ENCODE measurements at regions of chr14 and their contacts with region 1.

Region 1: GRCh38 chr14:23631702-23632460 is 4.3 kb upstream of the DHRS2 start:
- DNase-seq: peak; percentile 59 to 75 (median 69)
- H3K4me3 ChIP-seq: peak overlapping the region in 1 of 2 donors; percentile 20
- H3K4me3 Mint-ChIP-seq: peak overlapping the region; percentile 8 to 87 (median 66)
- H3K27ac ChIP-seq: no peak overlapping the region
- H3K27ac Mint-ChIP-seq: peak overlapping the region in 5 of 7 donors; percentile 13 to 59 (median 38)
- H3K4me1 ChIP-seq: peaks cover 5% of the 10 kb centered on the region
- H3K4me1 Mint-ChIP-seq: peaks cover 5 to 12% (median 6%) of the 10 kb centered on the region in 4 donors
- H3K27me3 ChIP-seq: no peaks in the 10 kb centered on the region
- H3K27me3 Mint-ChIP-seq: peaks cover 0 to 2% of the 10 kb centered on the region in 2 donors

Region 2: DNA sequence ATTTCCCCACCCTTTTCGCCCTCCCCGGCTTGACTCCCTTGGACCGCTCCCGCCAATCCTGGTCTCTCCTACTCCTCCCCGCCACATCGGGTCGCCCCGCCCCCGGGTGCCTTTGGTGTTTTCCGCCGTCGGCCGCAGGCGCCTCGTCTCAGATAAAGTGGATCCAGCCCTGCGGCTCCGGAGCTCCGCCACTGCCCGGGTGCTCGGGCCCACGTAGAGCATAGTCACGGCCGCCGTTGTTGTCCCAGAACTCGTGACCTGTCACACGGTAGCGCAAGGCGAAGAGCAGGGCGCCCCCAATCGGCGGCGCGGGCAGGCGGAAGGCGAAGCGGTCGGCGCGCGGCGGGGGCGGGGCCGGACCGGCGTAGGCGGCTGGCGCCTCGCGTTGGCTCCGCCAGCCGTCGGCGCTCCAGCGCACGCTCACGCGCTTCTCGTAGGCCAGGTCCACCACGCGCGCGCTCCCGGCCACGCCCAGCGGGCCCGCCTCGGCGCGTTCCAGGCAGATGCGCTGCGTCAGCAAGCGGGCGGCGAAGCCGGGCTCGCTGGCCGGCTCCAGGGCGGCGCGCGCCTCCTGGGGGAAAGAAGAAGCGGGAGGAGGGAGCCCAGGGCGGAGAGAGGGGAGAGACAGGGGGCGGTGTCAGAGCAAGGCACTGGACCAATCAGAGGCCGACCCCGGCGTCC is 330.5 kb before region 1 on chr14:
- CTCF ChIA-PET with region 1: no interaction called
- POLR2A ChIA-PET with region 1: no interaction called
- intact Hi-C with region 1: no loop called
- DNase-seq: peak; percentile 95 to 99 (median 98)
- H3K4me3 ChIP-seq: peak overlapping the region; percentile 86 to 90
- H3K4me3 Mint-ChIP-seq: peak overlapping the region; percentile 89 to 100 (median 90)
- H3K27ac ChIP-seq: peak overlapping the region; percentile 87
- H3K27ac Mint-ChIP-seq: peak overlapping the region; percentile 92 to 99 (median 96)
- H3K4me1 ChIP-seq: peaks cover 14% of the 10 kb centered on the region
- H3K4me1 Mint-ChIP-seq: peaks cover 14 to 29% (median 23%) of the 10 kb centered on the region in 4 donors
- H3K27me3 ChIP-seq: no peaks in the 10 kb centered on the region
- H3K27me3 Mint-ChIP-seq: peaks cover 8 to 9% of the 10 kb centered on the region in 2 donors

Region 3: DNA sequence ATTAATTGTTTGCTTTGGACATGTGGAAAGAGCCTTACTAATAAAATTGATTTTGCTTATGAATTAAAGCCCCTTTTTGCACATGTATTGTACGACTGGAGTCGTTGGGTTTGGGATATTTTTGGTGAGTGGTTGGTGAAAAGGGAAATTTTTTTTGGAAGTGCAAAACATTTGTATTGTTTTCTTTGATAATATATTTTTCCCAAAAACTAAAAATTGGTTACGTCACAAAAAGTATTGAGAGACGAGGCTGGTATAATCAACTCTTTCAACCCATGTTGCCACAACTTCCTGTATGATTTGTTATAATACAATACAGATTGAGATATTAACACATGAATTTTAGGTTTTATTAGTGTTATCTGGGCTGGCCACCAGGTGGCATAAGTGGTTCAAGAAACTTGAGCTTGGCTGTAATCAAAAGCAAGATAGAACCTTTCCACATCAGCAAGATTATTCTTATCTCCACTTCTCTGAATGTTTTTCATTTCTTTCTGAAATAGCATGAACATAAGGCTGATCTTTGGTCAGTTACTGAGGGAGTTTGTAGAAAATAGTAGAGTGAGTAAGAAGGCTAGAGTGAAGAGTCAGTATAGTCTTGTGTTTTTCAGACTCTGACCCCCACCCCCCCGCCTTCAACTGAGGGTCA is 153.6 kb before region 1 on chr14:
- CTCF ChIA-PET with region 1: interaction called, 10 read pairs
- POLR2A ChIA-PET with region 1: no interaction called
- intact Hi-C with region 1: no loop called
- DNase-seq: peak; percentile 67 to 73 (median 71)
- H3K4me3 ChIP-seq: no peak overlapping the region
- H3K4me3 Mint-ChIP-seq: no peak overlapping the region
- H3K27ac ChIP-seq: no peak overlapping the region
- H3K27ac Mint-ChIP-seq: peak overlapping the region in 4 of 7 donors; percentile 0 to 83 (median 28)
- H3K4me1 ChIP-seq: peaks cover 8% of the 10 kb centered on the region
- H3K4me1 Mint-ChIP-seq: peaks cover 4 to 12% (median 5%) of the 10 kb centered on the region in 4 donors
- H3K27me3 ChIP-seq: no peaks in the 10 kb centered on the region
- H3K27me3 Mint-ChIP-seq: no peaks in the 10 kb centered on the region

Region 4: GRCh38 chr14:23532658-23533057 is 99.2 kb before region 1 on chr14:
- CTCF ChIA-PET with region 1: no interaction called
- POLR2A ChIA-PET with region 1: no interaction called
- intact Hi-C with region 1: no loop called
- DNase-seq: no peak
- H3K4me3 ChIP-seq: no peak overlapping the region
- H3K4me3 Mint-ChIP-seq: no peak overlapping the region
- H3K27ac ChIP-seq: no peak overlapping the region
- H3K27ac Mint-ChIP-seq: peak overlapping the region in 1 of 7 donors; percentile 48
- H3K4me1 ChIP-seq: no peaks in the 10 kb centered on the region
- H3K4me1 Mint-ChIP-seq: no peaks in the 10 kb centered on the region
- H3K27me3 ChIP-seq: no peaks in the 10 kb centered on the region
- H3K27me3 Mint-ChIP-seq: no peaks in the 10 kb centered on the region

Region 5: DNA sequence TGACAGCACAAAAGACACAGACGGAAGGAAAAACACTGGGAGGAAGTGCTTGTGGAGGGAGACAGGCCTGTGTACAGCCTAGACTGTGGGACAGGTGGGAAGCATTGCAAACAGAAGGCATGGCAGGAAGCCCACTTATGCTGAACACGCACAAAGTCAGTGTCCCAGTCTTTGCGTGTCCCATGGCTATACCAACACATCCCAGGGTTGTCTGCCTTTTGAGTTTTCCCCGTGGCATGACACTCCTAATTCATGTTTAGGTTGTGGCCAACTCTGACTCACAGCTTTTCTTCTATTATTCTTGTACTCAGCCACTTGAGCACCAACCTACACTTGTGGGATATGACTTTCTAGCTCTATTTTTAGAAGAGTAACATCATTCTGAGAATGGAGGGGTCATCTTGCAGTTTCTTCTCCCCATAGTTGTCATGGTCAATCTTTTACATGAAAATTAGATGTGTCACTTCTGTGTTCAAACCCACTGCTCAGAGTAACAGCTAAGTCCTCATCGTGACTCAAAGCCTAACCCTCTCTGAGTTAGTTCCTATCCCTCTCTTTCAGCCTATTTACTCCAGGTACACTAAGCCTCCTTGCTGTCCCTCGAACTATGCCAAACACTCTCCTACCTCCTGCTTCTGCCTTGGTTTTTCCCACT is 25.8 kb before region 1 on chr14:
- CTCF ChIA-PET with region 1: interaction called, 87 read pairs
- POLR2A ChIA-PET with region 1: interaction called, 5 read pairs
- intact Hi-C with region 1: no loop called
- DNase-seq: no peak
- H3K4me3 ChIP-seq: no peak overlapping the region
- H3K4me3 Mint-ChIP-seq: no peak overlapping the region
- H3K27ac ChIP-seq: no peak overlapping the region
- H3K27ac Mint-ChIP-seq: peak overlapping the region in 2 of 7 donors; percentile 1 to 28
- H3K4me1 ChIP-seq: peaks cover 23% of the 10 kb centered on the region
- H3K4me1 Mint-ChIP-seq: peaks cover 22 to 30% (median 25%) of the 10 kb centered on the region in 4 donors
- H3K27me3 ChIP-seq: no peaks in the 10 kb centered on the region
- H3K27me3 Mint-ChIP-seq: peaks cover 0 to 2% of the 10 kb centered on the region in 2 donors

Region 6: GRCh38 chr14:23646648-23647549 is 15.0 kb after region 1 on chr14:
- CTCF ChIA-PET with region 1: interaction called, 45 read pairs
- POLR2A ChIA-PET with region 1: no interaction called
- intact Hi-C with region 1: no loop called
- DNase-seq: no peak
- H3K4me3 ChIP-seq: no peak overlapping the region
- H3K4me3 Mint-ChIP-seq: no peak overlapping the region
- H3K27ac ChIP-seq: no peak overlapping the region
- H3K27ac Mint-ChIP-seq: no peak overlapping the region
- H3K4me1 ChIP-seq: no peaks in the 10 kb centered on the region
- H3K4me1 Mint-ChIP-seq: no peaks in the 10 kb centered on the region
- H3K27me3 ChIP-seq: no peaks in the 10 kb centered on the region
- H3K27me3 Mint-ChIP-seq: peaks cover 2 to 3% of the 10 kb centered on the region in 2 donors

Region 7: GRCh38 chr14:23665375-23666192 is 33.7 kb after region 1 on chr14:
- CTCF ChIA-PET with region 1: interaction called, 27 read pairs
- POLR2A ChIA-PET with region 1: no interaction called
- intact Hi-C with region 1: no loop called
- DNase-seq: peak in 1 of 5 donors; percentile 18
- H3K4me3 ChIP-seq: no peak overlapping the region
- H3K4me3 Mint-ChIP-seq: no peak overlapping the region
- H3K27ac ChIP-seq: no peak overlapping the region
- H3K27ac Mint-ChIP-seq: no peak overlapping the region
- H3K4me1 ChIP-seq: no peaks in the 10 kb centered on the region
- H3K4me1 Mint-ChIP-seq: peaks cover 0 to under 1% (median under 1%) of the 10 kb centered on the region in 4 donors
- H3K27me3 ChIP-seq: no peaks in the 10 kb centered on the region
- H3K27me3 Mint-ChIP-seq: peaks cover 0 to 6% of the 10 kb centered on the region in 2 donors

Region 8: GRCh38 chr14:23929822-23930294 is 298.0 kb after region 1 on chr14:
- CTCF ChIA-PET with region 1: interaction called, 19 read pairs
- POLR2A ChIA-PET with region 1: no interaction called
- intact Hi-C with region 1: loop called (anchors 2 kb)
- DNase-seq: peak; percentile 67 to 73 (median 72)
- H3K4me3 ChIP-seq: no peak overlapping the region
- H3K4me3 Mint-ChIP-seq: no peak overlapping the region
- H3K27ac ChIP-seq: no peak overlapping the region
- H3K27ac Mint-ChIP-seq: no peak overlapping the region
- H3K4me1 ChIP-seq: no peaks in the 10 kb centered on the region
- H3K4me1 Mint-ChIP-seq: peaks cover 0 to 2% (median 0%) of the 10 kb centered on the region in 4 donors
- H3K27me3 ChIP-seq: no peaks in the 10 kb centered on the region
- H3K27me3 Mint-ChIP-seq: peaks cover 2 to 6% of the 10 kb centered on the region in 2 donors

Region 9: GRCh38 chr14:24051789-24052655 is 420.1 kb after region 1 on chr14 and contains the start of gene CARMIL3:
- CTCF ChIA-PET with region 1: no interaction called
- POLR2A ChIA-PET with region 1: no interaction called
- intact Hi-C with region 1: no loop called
- DNase-seq: peak; percentile 50 to 58 (median 53)
- H3K4me3 ChIP-seq: peak within 1 kb of the TSS in 1 of 2 donors; percentile 76
- H3K4me3 Mint-ChIP-seq: peak within 1 kb of the TSS; percentile 83 to 92 (median 88)
- H3K27ac ChIP-seq: peak within 1 kb of the TSS; percentile 16
- H3K27ac Mint-ChIP-seq: peak within 1 kb of the TSS in 5 of 7 donors; percentile 14 to 81 (median 68)
- H3K4me1 ChIP-seq: peaks cover 14% of the 10 kb centered on the region
- H3K4me1 Mint-ChIP-seq: peaks cover 10 to 17% (median 14%) of the 10 kb centered on the region in 4 donors
- H3K27me3 ChIP-seq: no peaks in the 10 kb centered on the region
- H3K27me3 Mint-ChIP-seq: peaks cover 6 to 8% of the 10 kb centered on the region in 2 donors
- total RNA-seq, gene CARMIL3: 0.15 to 0.22 TPM

Region 10: GRCh38 chr14:24678801-24679247 is 1046.9 kb after region 1 on chr14:
- CTCF ChIA-PET with region 1: no interaction called
- POLR2A ChIA-PET with region 1: no interaction called
- intact Hi-C with region 1: loop called (anchors 10 kb)
- DNase-seq: peak; percentile 79 to 83 (median 81)
- H3K4me3 ChIP-seq: no peak overlapping the region
- H3K4me3 Mint-ChIP-seq: peak overlapping the region; percentile 71 to 91 (median 80)
- H3K27ac ChIP-seq: no peak overlapping the region
- H3K27ac Mint-ChIP-seq: peak overlapping the region; percentile 48 to 95 (median 79)
- H3K4me1 ChIP-seq: peaks cover 14% of the 10 kb centered on the region
- H3K4me1 Mint-ChIP-seq: peaks cover 22 to 50% (median 34%) of the 10 kb centered on the region in 4 donors
- H3K27me3 ChIP-seq: no peaks in the 10 kb centered on the region
- H3K27me3 Mint-ChIP-seq: peaks cover 1 to 8% of the 10 kb centered on the region in 2 donors

Measured in CD4-positive, alpha-beta memory T cell (primary cell).